HCT116 (cell line): ENCODE measurements at regions of chr14 and their contacts with region 1.

Region 1: GRCh38 chr14:103078093-103078749 is 5.8 kb upstream of the LBHD2 start:
- DNase-seq: peak; percentile 84
- ATAC-seq: peak; percentile 43
- H3K4me3 ChIP-seq: no peak overlapping the region
- H3K27ac ChIP-seq: no peak overlapping the region
- H3K4me1 ChIP-seq: peaks cover 25 to 40% of the 10 kb centered on the region in 2 experiments
- H3K27me3 ChIP-seq: no peaks in the 10 kb centered on the region
- CTCF ChIP-seq: peak in 2 of 3 experiments; percentile 71 to 75; a peak in 4 of 6 replicates
- POLR2A ChIP-seq: no peak
- RAD21 ChIP-seq: no peak

Region 2: GRCh38 chr14:103185051-103185992 is 107.1 kb after region 1 on chr14:
- CTCF ChIA-PET with region 1: interaction called, 3 read pairs
- POLR2A ChIA-PET with region 1: no interaction called
- RAD21 ChIA-PET with region 1: no interaction called
- intact Hi-C with region 1: loop called (anchors 1 kb)
- DNase-seq: peak; percentile 40
- ATAC-seq: peak; percentile 58
- H3K4me3 ChIP-seq: no peak overlapping the region
- H3K27ac ChIP-seq: no peak overlapping the region
- H3K4me1 ChIP-seq: peaks cover 0 to 9% of the 10 kb centered on the region in 2 experiments; a peak in 2 of 4 replicates
- H3K27me3 ChIP-seq: no peaks in the 10 kb centered on the region
- CTCF ChIP-seq: peak; percentile 57 to 72 (median 70)
- POLR2A ChIP-seq: no peak
- RAD21 ChIP-seq: peak; percentile 67